ENCODE measurements at regions of chr2 and their contacts with region 1.

Region 1: DNA sequence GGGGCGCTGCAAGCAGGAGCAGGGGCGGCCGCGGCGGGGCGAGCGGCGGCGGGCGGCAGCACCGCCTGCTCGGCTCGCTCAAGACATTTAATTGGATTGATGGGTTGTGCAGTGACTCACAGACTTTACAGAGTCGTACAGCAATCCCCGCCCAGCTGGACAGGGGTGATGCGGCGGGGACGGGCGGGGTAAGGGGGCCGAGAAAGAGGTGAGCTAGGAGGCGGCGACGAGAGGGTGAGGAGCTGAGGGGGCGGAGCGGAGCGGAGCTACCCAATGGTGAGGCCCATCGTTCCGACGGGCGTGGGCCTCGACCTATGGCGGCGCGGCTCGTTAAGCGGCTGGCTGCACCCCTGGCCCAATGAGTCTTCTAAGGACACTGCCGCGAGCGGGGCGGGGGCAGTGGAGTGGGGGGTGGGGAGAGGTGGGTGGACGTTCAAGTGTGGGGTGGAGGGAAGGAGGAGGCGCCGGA is 97.1 kb upstream of the SERTAD2 start:
- DNase-seq: peak; percentile 99
- ATAC-seq: peak; percentile 89
- H3K4me3 ChIP-seq: peak overlapping the region; percentile 98
- H3K27ac ChIP-seq: peak overlapping the region; percentile 92
- H3K4me1 ChIP-seq: 0 out of 2 replicates have a peak, but pooled peaks cover 3% of the 10 kb centered on the region
- H3K27me3 ChIP-seq: no peaks in the 10 kb centered on the region
- CTCF ChIP-seq: no peak; a peak in 2 of 6 replicates
- EP300 ChIP-seq: no peak; a peak in 1 of 4 replicates
- POLR2A ChIP-seq: peak; percentile 92
- RAD21 ChIP-seq: peak; percentile 31; the same call in 1 of the 2 replicates

Region 2: DNA sequence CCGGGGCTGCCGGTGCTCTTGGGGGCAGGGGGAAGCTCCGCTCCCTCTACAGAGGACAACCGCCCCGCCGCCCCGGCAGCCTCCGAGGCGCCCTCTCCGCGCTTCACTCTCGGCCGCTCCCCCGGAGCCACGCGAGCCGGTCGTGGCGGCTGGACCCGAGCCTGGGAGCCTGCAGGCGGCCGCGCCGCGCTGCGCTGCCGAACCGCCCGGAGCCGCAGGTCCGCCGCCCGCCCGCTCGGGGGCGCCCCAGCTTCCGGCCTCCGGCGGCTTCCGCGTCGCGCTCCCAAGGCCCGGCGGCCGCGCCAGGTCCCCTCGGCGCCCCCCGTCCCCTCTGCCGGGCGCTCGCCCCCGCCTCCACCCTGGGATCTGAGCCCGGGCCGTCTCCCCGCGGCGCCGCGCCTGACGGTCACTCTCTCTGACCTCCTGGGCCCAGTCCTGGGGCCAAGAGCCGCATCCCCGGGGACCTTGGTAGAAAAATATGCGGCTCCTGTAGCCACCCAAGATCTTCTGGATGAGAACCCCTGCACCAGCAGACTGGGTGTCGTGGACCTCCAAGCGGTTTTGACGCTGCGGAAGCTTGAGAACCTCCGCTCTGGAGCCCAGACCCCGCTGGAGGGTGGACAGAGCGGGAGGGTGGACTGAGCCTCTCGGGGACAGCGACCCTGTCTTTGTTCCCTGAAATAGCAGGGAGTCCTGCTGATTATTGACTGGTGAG is 141.5 kb before region 1 on chr2:
- CTCF ChIA-PET with region 1: no interaction called
- POLR2A ChIA-PET with region 1: interaction called, 20 read pairs
- RAD21 ChIA-PET with region 1: interaction called, 9 read pairs
- SMC1A ChIA-PET with region 1: interaction called, 4 read pairs
- in situ Hi-C with region 1: no loop called
- intact Hi-C with region 1: no loop called
- DNase-seq: no peak
- ATAC-seq: peak; percentile 62
- H3K4me3 ChIP-seq: peak overlapping the region; percentile 68
- H3K27ac ChIP-seq: peak overlapping the region; percentile 14; the same call in 1 of the 2 replicates
- H3K4me1 ChIP-seq: peaks cover 38% of the 10 kb centered on the region
- H3K27me3 ChIP-seq: no peaks in the 10 kb centered on the region
- CTCF ChIP-seq: peak; percentile 30 to 63 (median 33); a peak in 4 of 6 replicates
- EP300 ChIP-seq: no peak
- POLR2A ChIP-seq: peak; percentile 70
- RAD21 ChIP-seq: peak; percentile 42

Region 3: GRCh38 chr2:64704161-64704560 is 46.7 kb before region 1 on chr2:
- CTCF ChIA-PET with region 1: interaction called, 4 read pairs
- POLR2A ChIA-PET with region 1: interaction called, 43 read pairs
- RAD21 ChIA-PET with region 1: interaction called, 44 read pairs
- SMC1A ChIA-PET with region 1: interaction called, 38 read pairs
- in situ Hi-C with region 1: no loop called
- intact Hi-C with region 1: loop called (anchors 2 kb)
- DNase-seq: no peak
- ATAC-seq: peak; percentile 14
- H3K4me3 ChIP-seq: 0 out of 2 replicates have a peak overlapping the region, but pooled peaks have one; percentile 7
- H3K27ac ChIP-seq: peak overlapping the region; percentile 54
- H3K4me1 ChIP-seq: peaks cover 30% of the 10 kb centered on the region
- H3K27me3 ChIP-seq: no peaks in the 10 kb centered on the region
- CTCF ChIP-seq: no peak
- EP300 ChIP-seq: no peak
- POLR2A ChIP-seq: no peak
- RAD21 ChIP-seq: no peak

Region 4: GRCh38 chr2:64767670-64768468 is 17.0 kb after region 1 on chr2:
- CTCF ChIA-PET with region 1: interaction called, 15 read pairs
- POLR2A ChIA-PET with region 1: interaction called, 58 read pairs
- RAD21 ChIA-PET with region 1: interaction called, 68 read pairs
- SMC1A ChIA-PET with region 1: interaction called, 59 read pairs
- in situ Hi-C with region 1: no loop called
- intact Hi-C with region 1: loop called (anchors 2 kb)
- DNase-seq: no peak
- ATAC-seq: peak; percentile 94
- H3K4me3 ChIP-seq: peak overlapping the region; percentile 84
- H3K27ac ChIP-seq: peak overlapping the region; percentile 87
- H3K4me1 ChIP-seq: peaks cover 12% of the 10 kb centered on the region
- H3K27me3 ChIP-seq: no peaks in the 10 kb centered on the region
- CTCF ChIP-seq: peak in 2 of 3 experiments; percentile 7 to 29; a peak in 2 of 6 replicates
- EP300 ChIP-seq: peak in 1 of 2 experiments; percentile 40; a peak in 2 of 4 replicates
- POLR2A ChIP-seq: peak; percentile 78
- RAD21 ChIP-seq: no peak

Region 5: DNA sequence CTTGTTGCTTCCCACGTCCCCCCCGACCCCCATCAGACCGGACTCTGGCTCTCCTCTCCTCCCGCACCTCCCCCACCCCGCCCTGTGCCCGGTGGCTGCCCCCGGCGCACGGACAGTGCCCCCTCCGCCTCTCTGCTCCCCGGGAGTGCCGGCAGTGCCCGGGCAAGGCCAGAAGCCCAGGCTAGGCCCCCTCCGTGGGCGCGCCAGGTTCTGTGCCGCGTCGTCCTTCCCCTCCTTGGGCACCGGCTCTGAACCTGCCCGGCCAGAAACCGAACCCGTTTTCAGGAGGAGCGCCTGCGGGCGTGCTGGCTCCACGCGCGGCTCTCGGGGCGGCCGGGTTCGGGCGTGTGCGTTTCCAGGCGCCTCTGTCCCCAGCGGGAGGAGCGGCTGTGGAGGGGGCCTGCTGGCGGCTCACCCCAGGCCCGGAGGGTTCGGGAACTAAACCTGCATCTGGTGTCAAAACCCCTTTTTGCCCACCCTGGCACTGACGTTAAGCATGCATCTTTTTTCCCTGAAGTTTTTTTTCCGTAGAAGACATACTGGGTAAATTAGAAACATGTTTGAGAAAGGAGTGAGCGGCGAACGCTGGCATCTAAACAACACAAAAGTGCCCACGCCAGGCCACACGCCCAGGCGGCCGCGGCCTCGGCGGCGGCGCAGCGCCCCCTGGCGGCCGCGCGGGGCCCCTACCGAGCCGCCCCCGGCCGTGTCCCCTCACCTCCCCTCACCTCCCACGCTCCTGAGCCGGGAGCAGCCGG is 114.4 kb after region 1 on chr2:
- CTCF ChIA-PET with region 1: interaction called, 9 read pairs
- POLR2A ChIA-PET with region 1: interaction called, 5 read pairs
- RAD21 ChIA-PET with region 1: interaction called, 27 read pairs
- SMC1A ChIA-PET with region 1: interaction called, 9 read pairs
- in situ Hi-C with region 1: no loop called
- intact Hi-C with region 1: loop called (anchors 2 kb)
- DNase-seq: no peak
- ATAC-seq: peak; percentile 84
- H3K4me3 ChIP-seq: peak overlapping the region; percentile 82
- H3K27ac ChIP-seq: peak overlapping the region; percentile 70
- H3K4me1 ChIP-seq: peaks cover 49% of the 10 kb centered on the region
- H3K27me3 ChIP-seq: no peaks in the 10 kb centered on the region
- CTCF ChIP-seq: peak; percentile 62 to 79 (median 64); a peak in 5 of 6 replicates
- EP300 ChIP-seq: no peak
- POLR2A ChIP-seq: no peak
- RAD21 ChIP-seq: peak; percentile 71

Region 6: DNA sequence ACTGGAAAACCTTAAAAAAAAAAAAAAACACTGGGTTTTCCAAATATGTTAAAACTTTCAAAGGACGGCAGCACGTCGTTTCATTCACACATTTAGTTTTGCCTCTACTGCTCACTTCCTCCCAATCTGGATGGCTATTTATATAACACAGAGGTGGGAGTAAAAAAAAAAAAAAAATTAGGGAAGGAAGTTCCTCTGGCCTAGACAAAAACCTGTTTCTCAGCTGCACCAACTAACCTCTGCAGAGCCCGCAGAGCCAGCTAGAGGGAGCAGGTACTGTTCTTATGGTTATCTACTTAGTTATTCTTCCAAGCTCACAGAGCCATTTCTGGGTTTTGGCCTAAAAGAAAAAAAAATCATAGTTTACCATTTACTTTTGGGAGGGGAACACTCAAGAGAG is 266.5 kb after region 1 on chr2:
- CTCF ChIA-PET with region 1: no interaction called
- POLR2A ChIA-PET with region 1: no interaction called
- RAD21 ChIA-PET with region 1: no interaction called
- SMC1A ChIA-PET with region 1: no interaction called
- in situ Hi-C with region 1: no loop called
- intact Hi-C with region 1: no loop called
- DNase-seq: no peak
- ATAC-seq: peak; percentile 72
- H3K4me3 ChIP-seq: no peak overlapping the region
- H3K27ac ChIP-seq: peak overlapping the region; percentile 38
- H3K4me1 ChIP-seq: peaks cover 24% of the 10 kb centered on the region
- H3K27me3 ChIP-seq: no peaks in the 10 kb centered on the region
- CTCF ChIP-seq: peak; percentile 46 to 53 (median 51); a peak in 5 of 6 replicates
- EP300 ChIP-seq: no peak
- POLR2A ChIP-seq: no peak
- RAD21 ChIP-seq: peak; percentile 52; the same call in 1 of the 2 replicates

Region 7: GRCh38 chr2:65040400-65041261 is 289.8 kb after region 1 on chr2:
- CTCF ChIA-PET with region 1: no interaction called
- POLR2A ChIA-PET with region 1: no interaction called
- RAD21 ChIA-PET with region 1: no interaction called
- SMC1A ChIA-PET with region 1: no interaction called
- in situ Hi-C with region 1: no loop called
- intact Hi-C with region 1: loop called (anchors 5 kb)
- DNase-seq: no peak
- ATAC-seq: peak; percentile 99
- H3K4me3 ChIP-seq: no peak overlapping the region
- H3K27ac ChIP-seq: no peak overlapping the region
- H3K4me1 ChIP-seq: peaks cover 2% of the 10 kb centered on the region; the same call in 1 of the 2 replicates
- H3K27me3 ChIP-seq: no peaks in the 10 kb centered on the region
- CTCF ChIP-seq: peak; percentile 93 to 96 (median 95)
- EP300 ChIP-seq: no peak
- POLR2A ChIP-seq: no peak
- RAD21 ChIP-seq: peak; percentile 83